Activated CD4-positive, alpha-beta memory T cell treated with anti-CD3 and anti-CD28 coated beads for 36 hours (primary cell): ENCODE measurements at regions of chr5 and their contacts with region 1.

Region 1: DNA sequence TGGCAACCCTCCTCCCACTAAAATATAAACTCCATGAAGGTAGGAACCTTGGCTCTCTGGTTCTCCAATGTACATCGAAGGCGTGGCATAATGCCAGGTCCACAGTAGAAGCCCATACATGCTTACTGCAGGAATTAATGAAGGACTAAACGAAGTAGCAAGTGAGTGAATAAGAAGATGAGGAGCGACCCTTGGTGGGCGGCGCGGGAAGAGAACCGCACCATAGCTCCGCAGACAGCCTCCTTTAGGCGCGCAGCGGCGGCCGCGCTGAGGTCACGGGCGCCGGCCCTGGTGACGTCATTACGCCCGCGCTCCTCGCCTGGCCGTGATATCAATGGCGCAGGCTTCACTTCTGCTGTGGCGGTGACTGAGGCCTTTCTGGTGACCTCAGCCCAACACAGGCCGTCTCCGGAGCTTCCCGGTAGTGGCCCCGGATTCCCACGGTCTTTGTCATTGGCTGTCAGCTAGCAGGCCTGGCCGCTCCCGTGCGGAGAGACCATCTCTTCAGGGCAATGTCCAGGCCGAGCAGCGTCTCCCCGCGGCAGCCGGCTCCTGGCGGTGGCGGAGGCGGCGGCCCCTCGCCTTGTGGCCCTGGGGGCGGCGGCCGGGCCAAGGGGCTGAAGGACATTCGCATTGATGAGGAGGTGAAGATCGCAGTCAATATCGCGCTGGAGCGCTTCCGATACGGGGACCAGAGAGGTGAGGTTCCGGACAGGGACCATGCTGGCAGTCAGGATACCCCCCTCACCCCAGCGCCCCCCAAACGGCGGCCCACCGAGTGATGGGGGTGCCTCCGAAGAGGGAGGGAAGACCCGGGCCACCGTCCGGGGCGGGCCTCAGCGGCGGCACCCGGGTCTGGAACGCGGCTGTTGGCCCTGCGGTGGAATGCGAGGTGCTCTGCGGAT is at the start of gene YTHDC2:
- DNase-seq: peak; percentile 93
- H3K4me3 Mint-ChIP-seq: peak within 1 kb of the TSS; percentile 90
- H3K27ac Mint-ChIP-seq: peak within 1 kb of the TSS; percentile 79
- H3K4me1 Mint-ChIP-seq: peaks cover 28% of the 10 kb centered on the region
- H3K27me3 Mint-ChIP-seq: peaks cover 7% of the 10 kb centered on the region
- total RNA-seq, gene YTHDC2: 27.3 to 28.9 TPM

Region 2: DNA sequence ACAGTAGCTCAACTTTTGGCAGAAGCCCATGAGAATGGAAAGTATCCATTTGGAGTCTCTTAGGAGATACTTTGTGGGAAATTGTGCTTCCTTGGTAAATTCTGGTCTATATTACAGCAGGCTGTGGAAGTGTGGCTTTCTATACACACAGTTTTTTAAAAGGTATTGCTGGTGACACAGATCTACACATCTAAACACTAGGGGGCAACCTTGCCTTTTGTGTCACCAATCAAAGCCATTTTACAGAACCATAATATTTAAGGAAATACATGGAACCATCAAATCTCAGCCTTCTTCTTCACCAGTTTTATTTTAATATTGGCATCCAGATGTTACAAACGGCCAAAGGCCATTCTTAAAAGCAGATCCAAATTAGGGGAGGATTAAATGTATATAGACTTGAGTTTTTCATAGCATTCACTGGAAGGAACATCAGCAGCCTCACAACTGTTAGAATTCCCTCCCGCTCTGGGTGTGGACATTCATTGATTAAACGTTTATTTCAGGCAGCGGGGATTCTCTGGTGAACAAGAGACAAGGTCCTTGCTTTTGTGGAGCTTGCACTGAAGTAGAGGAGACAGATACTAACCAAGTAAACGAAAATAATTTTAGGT is 962.1 kb before region 1 on chr5:
- CTCF ChIA-PET with region 1: no interaction called
- POLR2A ChIA-PET with region 1: no interaction called
- intact Hi-C with region 1: loop called (anchors 10 kb)
- DNase-seq: peak; percentile 14
- H3K4me3 Mint-ChIP-seq: no peak overlapping the region
- H3K27ac Mint-ChIP-seq: no peak overlapping the region
- H3K4me1 Mint-ChIP-seq: peaks cover 3% of the 10 kb centered on the region
- H3K27me3 Mint-ChIP-seq: no peaks in the 10 kb centered on the region

Region 3: DNA sequence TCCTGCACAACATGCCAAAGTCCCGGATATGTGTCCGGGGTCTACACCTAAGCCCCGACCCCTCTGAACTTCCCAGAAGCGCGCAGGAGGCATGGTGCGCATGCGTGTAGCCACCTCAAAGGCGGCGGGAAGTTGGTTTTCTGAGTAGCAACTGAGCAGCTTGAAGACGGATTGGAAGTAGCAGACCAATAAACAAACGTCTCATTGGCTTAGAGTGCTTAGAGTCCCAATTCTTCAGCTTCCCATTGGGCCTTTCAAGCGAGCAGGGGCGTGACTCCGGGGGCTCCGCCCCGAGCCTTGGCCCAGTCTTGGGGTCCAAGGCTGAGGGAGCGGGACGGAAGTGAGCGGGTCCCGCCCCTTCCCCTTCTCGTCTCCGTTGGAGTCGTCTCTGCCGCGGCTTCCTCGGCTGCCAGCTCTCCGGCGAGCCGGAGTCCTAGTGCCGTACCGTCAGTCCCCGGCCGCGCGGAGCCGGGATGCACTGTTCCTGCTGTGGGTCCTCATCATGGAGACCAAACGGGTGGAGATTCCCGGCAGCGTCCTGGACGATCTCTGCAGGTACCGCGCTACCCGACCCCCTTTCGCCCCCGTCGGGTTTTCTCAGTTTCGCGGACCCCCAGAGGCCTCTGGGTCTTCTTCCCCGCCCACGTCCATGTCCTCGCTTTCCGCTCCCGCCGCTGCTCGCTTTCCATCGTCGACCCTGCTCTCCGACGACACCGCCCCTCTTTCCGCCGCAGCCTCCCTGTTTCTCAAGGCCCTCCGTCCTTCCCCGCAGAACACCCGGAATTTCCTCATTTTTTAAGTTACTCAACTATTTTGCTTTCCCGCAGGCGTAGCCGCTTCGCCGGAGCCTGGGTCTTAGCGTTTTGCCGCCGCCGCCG is 537.0 kb before region 1 on chr5 and contains the start of gene DCP2:
- CTCF ChIA-PET with region 1: no interaction called
- POLR2A ChIA-PET with region 1: no interaction called
- intact Hi-C with region 1: loop called (anchors 1 kb)
- DNase-seq: peak; percentile 97
- H3K4me3 Mint-ChIP-seq: peak within 1 kb of the TSS; percentile 85
- H3K27ac Mint-ChIP-seq: peak within 1 kb of the TSS; percentile 98
- H3K4me1 Mint-ChIP-seq: peaks cover 39% of the 10 kb centered on the region
- H3K27me3 Mint-ChIP-seq: no peaks in the 10 kb centered on the region
- total RNA-seq, gene DCP2: 102 TPM

Region 4: GRCh38 chr5:113330533-113331208 is 183.0 kb before region 1 on chr5:
- CTCF ChIA-PET with region 1: interaction called, 7 read pairs
- POLR2A ChIA-PET with region 1: no interaction called
- intact Hi-C with region 1: loop called (anchors 1 kb)
- DNase-seq: no peak
- H3K4me3 Mint-ChIP-seq: no peak overlapping the region
- H3K27ac Mint-ChIP-seq: no peak overlapping the region
- H3K4me1 Mint-ChIP-seq: peaks cover 13% of the 10 kb centered on the region
- H3K27me3 Mint-ChIP-seq: no peaks in the 10 kb centered on the region

Region 5: GRCh38 chr5:113489299-113489698 is 24.3 kb before region 1 on chr5:
- CTCF ChIA-PET with region 1: no interaction called
- POLR2A ChIA-PET with region 1: no interaction called
- intact Hi-C with region 1: loop called (anchors 1 kb)
- DNase-seq: no peak
- H3K4me3 Mint-ChIP-seq: no peak overlapping the region
- H3K27ac Mint-ChIP-seq: no peak overlapping the region
- H3K4me1 Mint-ChIP-seq: peaks cover 14% of the 10 kb centered on the region
- H3K27me3 Mint-ChIP-seq: peaks cover 56% of the 10 kb centered on the region